ENCODE measurements at regions of chr1 and their contacts with region 1.

Region 1: GRCh38 chr1:67149179-67149770 is 14.5 kb upstream of the C1orf141 start:
- DNase-seq: peak; percentile 86
- H3K4me3 Mint-ChIP-seq: no peak overlapping the region
- H3K27ac Mint-ChIP-seq: peak overlapping the region; percentile 14
- H3K4me1 Mint-ChIP-seq: peaks cover 14% of the 10 kb centered on the region
- H3K27me3 Mint-ChIP-seq: peaks cover 33% of the 10 kb centered on the region
- CTCF ChIP-seq: peak; percentile 77

Region 2: GRCh38 chr1:66957938-66958337 is 191.3 kb before region 1 on chr1:
- CTCF ChIA-PET with region 1: interaction called, 10 read pairs
- POLR2A ChIA-PET with region 1: no interaction called
- intact Hi-C with region 1: no loop called
- DNase-seq: no peak
- H3K4me3 Mint-ChIP-seq: no peak overlapping the region
- H3K27ac Mint-ChIP-seq: peak overlapping the region; percentile 55
- H3K4me1 Mint-ChIP-seq: no peaks in the 10 kb centered on the region
- H3K27me3 Mint-ChIP-seq: no peaks in the 10 kb centered on the region
- CTCF ChIP-seq: no peak

Region 3: DNA sequence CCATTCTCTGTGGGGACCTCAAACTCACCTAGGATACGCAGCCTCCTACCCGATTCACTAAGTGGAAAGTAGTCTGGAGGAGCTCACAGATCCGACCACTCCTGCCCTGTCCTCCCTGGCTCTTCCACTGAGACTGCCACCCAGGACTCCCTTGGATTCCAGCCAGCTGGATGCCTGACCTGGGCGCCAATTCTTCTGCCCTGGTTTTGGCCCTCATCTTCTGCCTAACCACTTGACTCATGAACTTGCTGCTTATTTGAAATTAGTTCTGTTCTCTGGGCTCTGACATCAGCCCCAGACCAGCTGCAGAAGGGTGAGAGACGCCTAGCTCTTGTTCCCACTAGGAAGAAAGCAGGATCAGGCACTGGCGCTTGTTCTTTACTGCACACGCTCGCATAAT is 144.2 kb before region 1 on chr1:
- CTCF ChIA-PET with region 1: interaction called, 84 read pairs
- POLR2A ChIA-PET with region 1: no interaction called
- intact Hi-C with region 1: no loop called
- DNase-seq: no peak
- H3K4me3 Mint-ChIP-seq: no peak overlapping the region
- H3K27ac Mint-ChIP-seq: no peak overlapping the region
- H3K4me1 Mint-ChIP-seq: no peaks in the 10 kb centered on the region
- H3K27me3 Mint-ChIP-seq: no peaks in the 10 kb centered on the region
- CTCF ChIP-seq: no peak

Region 4: DNA sequence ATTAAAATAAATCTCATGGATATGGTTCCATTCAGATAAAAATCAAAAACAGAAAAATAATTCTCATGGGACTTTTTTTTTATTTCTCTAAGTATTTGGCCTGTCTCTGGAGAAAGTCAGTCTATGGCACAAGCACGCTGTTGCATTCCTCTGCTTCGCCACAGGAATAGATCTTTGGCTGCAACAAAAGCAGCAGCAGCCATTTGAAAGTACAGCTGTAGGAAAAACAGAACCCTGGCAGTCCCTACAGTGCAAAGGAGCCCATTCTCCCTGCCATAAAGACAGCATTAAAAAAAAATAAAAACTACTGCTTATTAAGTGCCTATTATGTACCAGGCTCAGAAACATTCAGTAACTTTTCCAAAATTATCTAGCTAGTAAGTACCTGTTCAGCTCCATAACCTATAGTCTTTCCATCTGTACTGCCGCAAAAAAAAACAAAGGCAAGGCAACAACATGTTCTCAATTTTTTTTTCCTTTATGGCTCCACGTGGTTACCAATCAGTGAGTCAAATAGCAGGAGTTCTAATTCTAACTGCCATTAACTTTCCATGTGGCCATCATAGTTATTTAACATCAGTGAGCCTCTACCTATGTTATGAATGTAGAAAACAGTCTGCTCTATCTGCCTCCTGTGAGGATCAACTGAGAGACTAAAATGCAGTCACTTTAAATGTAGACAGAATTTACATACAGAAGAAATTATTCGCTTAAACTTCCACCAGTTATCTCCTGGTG is 118.0 kb before region 1 on chr1:
- CTCF ChIA-PET with region 1: interaction called, 29 read pairs
- POLR2A ChIA-PET with region 1: no interaction called
- intact Hi-C with region 1: no loop called
- DNase-seq: no peak
- H3K4me3 Mint-ChIP-seq: no peak overlapping the region
- H3K27ac Mint-ChIP-seq: no peak overlapping the region
- H3K4me1 Mint-ChIP-seq: no peaks in the 10 kb centered on the region
- H3K27me3 Mint-ChIP-seq: no peaks in the 10 kb centered on the region
- CTCF ChIP-seq: no peak

Region 5: DNA sequence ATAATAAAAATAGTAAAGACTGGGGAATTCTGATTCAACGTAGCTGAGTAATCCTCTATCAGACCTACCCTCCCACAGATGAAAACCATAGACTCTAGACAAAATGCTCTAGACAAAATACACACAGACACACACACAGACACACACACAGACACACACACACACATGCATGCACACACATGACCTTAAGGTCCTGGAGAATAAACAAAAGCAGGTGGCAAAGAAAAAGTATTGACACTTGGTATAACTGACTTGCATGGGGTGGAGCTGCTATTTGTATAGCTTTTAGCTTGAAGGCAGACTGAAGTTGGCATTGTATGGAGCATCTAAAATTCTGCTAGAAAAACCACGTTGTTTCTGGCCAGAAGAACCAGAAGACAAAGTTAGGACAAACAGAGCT is 43.8 kb before region 1 on chr1:
- CTCF ChIA-PET with region 1: interaction called, 11 read pairs
- POLR2A ChIA-PET with region 1: no interaction called
- intact Hi-C with region 1: no loop called
- DNase-seq: no peak
- H3K4me3 Mint-ChIP-seq: no peak overlapping the region
- H3K27ac Mint-ChIP-seq: no peak overlapping the region
- H3K4me1 Mint-ChIP-seq: no peaks in the 10 kb centered on the region
- H3K27me3 Mint-ChIP-seq: no peaks in the 10 kb centered on the region
- CTCF ChIP-seq: no peak

Region 6: GRCh38 chr1:67134695-67135094 is 14.6 kb before region 1 on chr1 and contains the start of gene C1orf141:
- CTCF ChIA-PET with region 1: interaction called, 65 read pairs
- POLR2A ChIA-PET with region 1: no interaction called
- intact Hi-C with region 1: no loop called
- DNase-seq: no peak
- H3K4me3 Mint-ChIP-seq: no peak within 1 kb of the TSS
- H3K27ac Mint-ChIP-seq: no peak within 1 kb of the TSS
- H3K4me1 Mint-ChIP-seq: peaks cover 7% of the 10 kb centered on the region
- H3K27me3 Mint-ChIP-seq: no peaks in the 10 kb centered on the region
- CTCF ChIP-seq: no peak
- total RNA-seq, gene C1orf141: not detected in 2 replicates

Region 7: GRCh38 chr1:67500413-67500959 is 351.2 kb after region 1 on chr1:
- CTCF ChIA-PET with region 1: interaction called, 11 read pairs
- POLR2A ChIA-PET with region 1: no interaction called
- intact Hi-C with region 1: loop called (anchors 10 kb)
- DNase-seq: peak; percentile 92
- H3K4me3 Mint-ChIP-seq: no peak overlapping the region
- H3K27ac Mint-ChIP-seq: no peak overlapping the region
- H3K4me1 Mint-ChIP-seq: no peaks in the 10 kb centered on the region
- H3K27me3 Mint-ChIP-seq: no peaks in the 10 kb centered on the region
- CTCF ChIP-seq: peak; percentile 95